Right lobe of liver (tissue), 6 donors: ENCODE measurements at regions of chrX and their contacts with region 1.

Region 1: DNA sequence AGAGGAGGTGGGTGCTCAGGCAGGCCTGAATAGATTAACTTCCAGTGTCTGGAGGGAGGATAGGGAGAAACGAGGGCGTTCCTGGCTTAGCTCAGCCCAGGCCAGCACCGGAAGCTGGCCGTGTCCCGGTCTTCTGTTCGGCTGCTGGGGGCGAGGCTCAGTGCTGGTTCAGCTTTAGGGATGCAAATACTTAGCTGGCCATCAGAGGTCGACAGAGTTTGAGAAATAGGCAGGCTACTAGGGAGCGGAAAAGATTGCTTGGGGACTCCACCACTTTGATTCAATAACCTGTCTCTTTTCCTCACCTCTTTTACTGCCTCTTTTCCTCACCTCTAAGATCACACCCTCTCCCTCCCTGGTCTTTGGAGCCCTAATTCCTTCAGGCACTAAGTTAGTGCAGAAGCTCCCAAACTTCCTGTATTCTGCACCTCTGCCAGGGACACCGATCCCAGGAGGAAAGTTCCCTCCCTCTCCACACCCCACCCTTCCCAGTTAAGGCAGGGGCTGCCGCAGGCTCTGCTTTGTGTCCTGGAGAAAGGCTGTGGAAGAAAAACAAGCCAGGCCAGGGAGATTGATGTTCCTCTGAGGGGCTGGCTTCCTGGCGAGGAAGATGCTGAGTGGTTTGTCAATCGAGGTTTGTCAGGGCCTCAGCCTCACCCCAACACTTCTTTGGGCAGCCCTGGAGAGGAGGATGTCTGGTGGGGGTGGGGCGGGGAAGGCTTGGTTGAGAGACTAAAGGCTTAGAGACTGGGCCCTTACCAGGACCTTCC is 6.0 kb upstream of the EFNB1 start:
- DNase-seq: peak in 1 of 3 donors; percentile 60
- ATAC-seq: peak; percentile 85 to 94 (median 86)
- H3K4me3 ChIP-seq: no peak overlapping the region
- H3K27ac ChIP-seq: no peak overlapping the region
- H3K4me1 ChIP-seq: no peaks in the 10 kb centered on the region
- H3K27me3 ChIP-seq: peaks cover 0 to 8% of the 10 kb centered on the region in 2 donors
- CTCF ChIP-seq: peak; percentile 52 to 65 (median 59)
- POLR2A ChIP-seq: no peak

Region 2: GRCh38 chrX:68719904-68720614 is 102.8 kb before region 1 on chrX:
- intact Hi-C with region 1: loop called in 1 of 2 experiments (anchors 10 kb)
- DNase-seq: peak in 2 of 3 donors; percentile 10 to 55
- ATAC-seq: peak; percentile 20 to 50 (median 41)
- H3K4me3 ChIP-seq: no peak overlapping the region
- H3K27ac ChIP-seq: no peak overlapping the region
- H3K4me1 ChIP-seq: no peaks in the 10 kb centered on the region
- H3K27me3 ChIP-seq: no peaks in the 10 kb centered on the region
- CTCF ChIP-seq: peak in 2 of 4 donors; percentile 11 to 15
- POLR2A ChIP-seq: no peak

Region 3: GRCh38 chrX:69285881-69286564 is 463.2 kb after region 1 on chrX:
- intact Hi-C with region 1: loop called (anchors 2 to 5 kb)
- DNase-seq: peak; percentile 60 to 72 (median 62)
- ATAC-seq: peak; percentile 75 to 88 (median 84)
- H3K4me3 ChIP-seq: peak overlapping the region; percentile 20 to 35 (median 32)
- H3K27ac ChIP-seq: no peak overlapping the region
- H3K4me1 ChIP-seq: no peaks in the 10 kb centered on the region
- H3K27me3 ChIP-seq: no peaks in the 10 kb centered on the region
- CTCF ChIP-seq: peak; percentile 83 to 93 (median 90)
- POLR2A ChIP-seq: no peak